ENCODE measurements at regions of chr5 and their contacts with region 1.

Region 1: DNA sequence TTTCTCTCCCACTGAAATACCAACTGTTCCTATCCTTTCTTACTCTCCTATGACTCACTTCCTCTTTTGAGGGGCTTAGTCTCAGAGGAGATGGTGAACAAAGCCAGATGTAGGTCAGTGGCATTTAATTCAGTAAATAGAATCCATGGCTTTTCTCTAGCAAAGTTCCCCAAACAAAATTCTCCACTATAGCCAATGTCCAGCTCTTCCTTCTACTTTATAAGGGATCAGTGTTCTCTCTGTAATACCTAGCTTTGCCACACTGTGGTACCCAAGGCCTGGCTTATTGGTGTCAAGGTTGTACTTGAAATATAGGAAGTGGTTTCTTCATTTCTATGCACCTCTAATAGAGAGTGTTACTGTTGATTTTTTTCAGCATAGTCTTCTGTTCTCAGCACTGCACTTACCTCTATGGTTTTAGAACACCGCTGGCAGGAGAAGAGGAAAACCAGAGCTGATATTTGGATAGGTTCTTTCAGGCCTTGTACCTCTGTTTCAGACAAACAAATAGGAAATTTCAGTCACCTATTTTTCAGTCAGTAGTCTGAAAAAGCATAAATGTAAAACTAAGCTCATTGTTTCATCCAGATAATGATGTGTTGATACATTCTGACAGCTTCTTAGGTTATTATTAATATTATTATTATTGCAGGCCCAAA is 40.6 kb upstream of the ITGA2 start:
- DNase-seq: peak; percentile 75
- ATAC-seq: peak; percentile 98
- H3K4me3 Mint-ChIP-seq: no peak overlapping the region
- H3K27ac Mint-ChIP-seq: no peak overlapping the region
- H3K4me1 Mint-ChIP-seq: peaks cover 16% of the 10 kb centered on the region
- H3K27me3 Mint-ChIP-seq: peaks cover 7% of the 10 kb centered on the region

Region 2: DNA sequence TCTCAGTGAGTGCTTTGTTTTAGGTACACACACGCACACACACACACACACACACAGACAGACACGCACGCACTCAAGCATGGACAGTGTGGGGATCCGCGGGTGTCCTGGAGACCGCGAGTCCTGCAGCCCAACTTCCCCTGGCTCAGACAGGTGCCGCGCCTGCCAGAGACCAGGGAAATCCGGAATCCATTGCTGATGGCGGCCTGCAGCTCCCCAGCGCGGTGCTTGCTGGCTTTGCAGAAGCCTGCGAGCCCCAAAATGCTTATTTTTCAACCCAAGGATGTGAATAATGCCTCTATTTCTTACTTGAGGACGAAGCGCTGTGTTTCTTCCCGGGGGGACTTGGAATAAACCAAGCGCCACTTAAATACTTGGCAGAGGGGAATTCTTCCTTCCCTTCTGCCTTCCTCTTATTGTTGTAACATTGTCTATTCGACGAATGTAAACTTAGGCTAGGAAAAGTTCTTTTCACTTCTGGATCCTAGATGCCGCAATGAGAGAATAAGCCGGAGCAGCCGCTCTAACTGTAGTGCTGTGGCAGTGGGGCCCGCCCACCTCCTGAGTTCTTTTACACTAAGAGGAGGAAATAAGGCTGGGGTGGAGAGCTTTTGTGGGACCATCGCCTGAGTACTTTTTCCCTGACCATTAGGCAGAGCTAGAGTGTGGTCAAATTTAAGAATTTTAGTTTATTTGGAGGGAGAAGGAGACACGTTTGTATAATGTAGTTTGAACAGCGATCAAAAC is 41.4 kb after region 1 on chr5:
- CTCF ChIA-PET with region 1: interaction called, 8 read pairs
- POLR2A ChIA-PET with region 1: no interaction called
- intact Hi-C with region 1: loop called (anchors 2 to 5 kb)
- DNase-seq: peak; percentile 62
- ATAC-seq: peak; percentile 50
- H3K4me3 Mint-ChIP-seq: peak overlapping the region; percentile 65
- H3K27ac Mint-ChIP-seq: no peak overlapping the region
- H3K4me1 Mint-ChIP-seq: peaks cover 16% of the 10 kb centered on the region
- H3K27me3 Mint-ChIP-seq: peaks cover 42% of the 10 kb centered on the region

Region 3: DNA sequence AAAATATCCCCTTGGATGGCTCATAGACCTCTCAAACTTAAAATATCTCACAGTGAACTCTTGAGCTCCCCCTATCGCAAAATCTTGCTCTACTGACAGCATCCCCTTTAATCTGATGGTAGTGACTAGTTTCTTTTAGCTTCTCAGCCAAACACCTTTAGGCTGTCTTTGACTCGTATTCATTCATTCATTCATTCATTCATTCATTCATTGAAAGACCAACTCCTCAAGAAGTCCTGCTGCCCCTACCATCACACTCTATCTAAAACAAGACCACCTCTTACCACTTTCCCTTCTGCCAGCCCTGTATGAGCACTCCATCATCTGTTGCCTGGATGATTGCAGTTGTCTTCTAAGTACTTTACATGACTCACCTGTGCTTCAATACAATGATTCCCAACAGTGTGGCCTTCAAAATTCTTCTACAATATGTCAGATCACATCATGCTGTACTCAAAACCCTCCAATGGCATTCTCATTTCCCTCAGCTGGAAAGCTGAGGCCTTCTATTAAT is 87.4 kb after region 1 on chr5:
- CTCF ChIA-PET with region 1: interaction called, 13 read pairs
- POLR2A ChIA-PET with region 1: no interaction called
- intact Hi-C with region 1: no loop called
- DNase-seq: peak; percentile 20
- ATAC-seq: no peak
- H3K4me3 Mint-ChIP-seq: no peak overlapping the region
- H3K27ac Mint-ChIP-seq: no peak overlapping the region
- H3K4me1 Mint-ChIP-seq: peaks cover 33% of the 10 kb centered on the region
- H3K27me3 Mint-ChIP-seq: peaks cover 6% of the 10 kb centered on the region

Region 4: GRCh38 chr5:53089345-53089991 is 140.9 kb after region 1 on chr5:
- CTCF ChIA-PET with region 1: interaction called, 143 read pairs
- POLR2A ChIA-PET with region 1: no interaction called
- intact Hi-C with region 1: no loop called
- DNase-seq: no peak
- ATAC-seq: peak; percentile 86
- H3K4me3 Mint-ChIP-seq: peak overlapping the region; percentile 60
- H3K27ac Mint-ChIP-seq: peak overlapping the region; percentile 83
- H3K4me1 Mint-ChIP-seq: peaks cover 30% of the 10 kb centered on the region
- H3K27me3 Mint-ChIP-seq: peaks cover 2% of the 10 kb centered on the region

Region 5: DNA sequence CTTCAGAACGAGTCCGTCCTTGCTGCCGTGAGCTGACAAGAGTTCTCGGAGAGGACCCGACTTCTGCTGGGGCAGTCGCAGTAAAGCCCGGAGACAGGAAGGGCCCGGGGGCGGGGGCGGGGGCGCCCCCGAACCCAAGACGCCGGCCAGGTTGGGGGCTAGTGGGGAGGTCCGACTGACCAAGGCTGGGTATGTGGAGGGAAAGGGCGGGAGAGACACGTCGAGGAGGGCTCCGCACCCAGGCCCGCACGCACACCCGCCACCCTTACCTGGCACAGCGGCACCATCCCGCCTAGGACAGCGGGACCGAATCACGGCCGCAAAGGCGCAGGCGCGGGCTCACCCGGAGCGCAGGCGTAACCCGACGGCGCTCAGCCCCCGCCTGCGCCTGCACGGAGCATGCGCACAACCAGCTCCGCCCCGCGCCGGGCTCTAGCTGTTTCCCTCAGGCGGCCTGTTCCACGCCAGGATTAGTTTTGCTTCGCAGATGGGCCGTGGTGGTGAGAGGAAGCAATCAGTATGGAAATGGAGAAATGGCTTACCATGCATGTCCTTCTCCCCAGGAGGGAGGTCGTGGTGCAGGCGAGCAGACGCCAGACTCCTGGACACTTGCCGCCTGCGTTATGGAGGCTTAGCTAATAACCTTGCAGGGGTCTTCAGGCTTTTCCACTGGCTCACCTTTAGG is 161.0 kb after region 1 on chr5 and contains the start of gene MOCS2:
- CTCF ChIA-PET with region 1: interaction called, 14 read pairs
- POLR2A ChIA-PET with region 1: no interaction called
- intact Hi-C with region 1: no loop called
- DNase-seq: peak; percentile 95
- ATAC-seq: peak; percentile 99
- H3K4me3 Mint-ChIP-seq: peak within 1 kb of the TSS; percentile 93
- H3K27ac Mint-ChIP-seq: peak within 1 kb of the TSS; percentile 94
- H3K4me1 Mint-ChIP-seq: peaks cover 44% of the 10 kb centered on the region
- H3K27me3 Mint-ChIP-seq: no peaks in the 10 kb centered on the region
- total RNA-seq, gene MOCS2: 21.0 to 21.3 TPM

Region 6: GRCh38 chr5:53406630-53407316 is 458.2 kb after region 1 on chr5:
- CTCF ChIA-PET with region 1: no interaction called
- POLR2A ChIA-PET with region 1: no interaction called
- intact Hi-C with region 1: no loop called
- DNase-seq: no peak
- ATAC-seq: no peak
- H3K4me3 Mint-ChIP-seq: no peak overlapping the region
- H3K27ac Mint-ChIP-seq: no peak overlapping the region
- H3K4me1 Mint-ChIP-seq: peaks cover 3% of the 10 kb centered on the region
- H3K27me3 Mint-ChIP-seq: peaks cover 3% of the 10 kb centered on the region

Measured in activated CD4-positive, alpha-beta T cell treated with anti-CD3 and anti-CD28 coated beads for 36 hours (primary cell).